ENCODE measurements at regions of chr12 and their contacts with region 1.

Region 1: DNA sequence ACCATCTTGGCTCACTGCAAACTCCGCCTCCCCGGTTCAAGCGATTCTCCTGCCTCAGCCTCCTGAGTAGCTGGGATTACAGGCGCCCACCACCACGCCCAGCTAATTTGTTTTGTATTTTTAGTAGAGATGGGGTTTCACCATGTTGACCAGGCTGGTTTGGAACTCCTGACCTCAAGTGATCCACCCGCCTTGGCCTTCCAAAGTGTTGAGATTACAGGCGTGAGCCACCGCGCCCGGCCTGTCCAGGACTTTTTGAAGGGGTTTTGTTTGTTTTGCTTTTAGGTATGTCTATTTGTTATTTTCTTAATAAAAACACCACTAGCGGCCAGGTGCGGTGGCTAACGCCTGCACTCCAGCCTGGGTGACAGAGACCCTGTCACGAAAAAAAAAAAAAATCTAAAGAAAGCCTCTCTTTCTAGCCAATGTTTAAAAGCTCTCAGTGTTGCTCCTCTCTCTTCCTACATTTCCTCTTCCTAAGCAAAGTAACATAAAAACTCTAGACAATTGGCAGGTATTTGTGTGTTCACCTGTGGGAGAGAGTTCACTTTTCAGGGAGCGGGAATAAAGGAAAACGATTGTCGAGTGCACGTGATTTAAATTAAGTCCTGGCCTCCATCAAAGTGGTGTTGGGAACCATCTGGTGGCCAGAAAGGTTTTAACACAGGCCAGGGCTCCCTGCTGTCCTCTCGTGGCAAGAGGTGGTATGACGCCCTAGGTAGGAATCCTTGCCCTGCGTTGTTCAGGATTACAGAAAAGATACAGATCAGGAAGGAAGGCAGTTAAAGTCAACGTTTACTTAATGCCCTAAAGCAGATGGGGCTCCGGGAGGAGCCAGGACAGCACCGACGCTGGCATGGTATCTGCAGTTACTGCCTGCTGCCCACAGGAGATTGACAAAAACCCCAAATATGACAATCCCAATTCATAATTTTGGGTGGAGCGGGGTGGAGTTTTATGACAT is 36.2 kb upstream of the ATP23 start:
- DNase-seq: peak; percentile 73
- H3K4me3 ChIP-seq: no peak overlapping the region
- H3K27ac ChIP-seq: no peak overlapping the region
- H3K4me1 ChIP-seq: no peaks in the 10 kb centered on the region
- H3K27me3 ChIP-seq: no peaks in the 10 kb centered on the region
- CTCF ChIP-seq: peak; percentile 100

Region 2: GRCh38 chr12:57751788-57752667 is 153.1 kb before region 1 on chr12 and contains the start of gene CDK4:
- CTCF ChIA-PET with region 1: no interaction called
- dilution Hi-C with region 1: no loop called
- in situ Hi-C with region 1: loop called in 1 of 2 experiments (anchors 10 kb)
- intact Hi-C with region 1: loop called (anchors 5 kb)
- DNase-seq: peak; percentile 99
- H3K4me3 ChIP-seq: peak within 1 kb of the TSS; percentile 69 to 89 (median 71)
- H3K27ac ChIP-seq: peak within 1 kb of the TSS; percentile 81
- H3K4me1 ChIP-seq: peaks cover 35% of the 10 kb centered on the region
- H3K27me3 ChIP-seq: no peaks in the 10 kb centered on the region
- CTCF ChIP-seq: no peak
- total RNA-seq, gene CDK4: 103 to 163 TPM

Region 3: GRCh38 chr12:57782608-57783465 is 122.3 kb before region 1 on chr12 and contains the start of gene TSFM:
- CTCF ChIA-PET with region 1: no interaction called
- dilution Hi-C with region 1: no loop called
- in situ Hi-C with region 1: no loop called
- intact Hi-C with region 1: loop called (anchors 1 kb)
- DNase-seq: peak; percentile 86
- H3K4me3 ChIP-seq: peak within 1 kb of the TSS; percentile 90 to 98 (median 98)
- H3K27ac ChIP-seq: peak within 1 kb of the TSS; percentile 69
- H3K4me1 ChIP-seq: peaks cover 10% of the 10 kb centered on the region
- H3K27me3 ChIP-seq: no peaks in the 10 kb centered on the region
- CTCF ChIP-seq: peak; percentile 80 to 94
- total RNA-seq, gene TSFM: 11.8 to 27.0 TPM

Region 4: GRCh38 chr12:57803319-57803893 is 101.7 kb before region 1 on chr12:
- CTCF ChIA-PET with region 1: no interaction called
- dilution Hi-C with region 1: no loop called
- in situ Hi-C with region 1: no loop called
- intact Hi-C with region 1: loop called (anchors 1 kb)
- DNase-seq: peak; percentile 42
- H3K4me3 ChIP-seq: no peak overlapping the region
- H3K27ac ChIP-seq: no peak overlapping the region
- H3K4me1 ChIP-seq: no peaks in the 10 kb centered on the region
- H3K27me3 ChIP-seq: no peaks in the 10 kb centered on the region
- CTCF ChIP-seq: peak; percentile 82 to 89

Region 5: GRCh38 chr12:57836442-57837375 is 68.4 kb before region 1 on chr12:
- CTCF ChIA-PET with region 1: interaction called, 5 read pairs
- dilution Hi-C with region 1: no loop called
- in situ Hi-C with region 1: loop called (anchors 5 kb)
- intact Hi-C with region 1: loop called (anchors 1 kb)
- DNase-seq: peak; percentile 61
- H3K4me3 ChIP-seq: no peak overlapping the region
- H3K27ac ChIP-seq: peak overlapping the region; percentile 31
- H3K4me1 ChIP-seq: peaks cover 47% of the 10 kb centered on the region
- H3K27me3 ChIP-seq: no peaks in the 10 kb centered on the region
- CTCF ChIP-seq: no peak

Region 6: GRCh38 chr12:57846577-57847319 is 58.4 kb before region 1 on chr12 and contains the start of gene CTDSP2:
- CTCF ChIA-PET with region 1: no interaction called
- dilution Hi-C with region 1: no loop called
- in situ Hi-C with region 1: no loop called
- intact Hi-C with region 1: loop called (anchors 1 kb)
- DNase-seq: peak; percentile 94
- H3K4me3 ChIP-seq: peak within 1 kb of the TSS; percentile 92 to 96 (median 95)
- H3K27ac ChIP-seq: peak within 1 kb of the TSS; percentile 93
- H3K4me1 ChIP-seq: peaks cover 27% of the 10 kb centered on the region
- H3K27me3 ChIP-seq: no peaks in the 10 kb centered on the region
- CTCF ChIP-seq: no peak
- total RNA-seq, gene CTDSP2: 51.3 to 76.1 TPM

Region 7: GRCh38 chr12:57888409-57889157 is 16.5 kb before region 1 on chr12:
- CTCF ChIA-PET with region 1: no interaction called
- dilution Hi-C with region 1: no loop called
- in situ Hi-C with region 1: no loop called
- intact Hi-C with region 1: loop called (anchors 1 kb)
- DNase-seq: peak; percentile 98
- H3K4me3 ChIP-seq: peak overlapping the region in 2 of 3 experiments; percentile 11 to 28
- H3K27ac ChIP-seq: peak overlapping the region; percentile 71
- H3K4me1 ChIP-seq: peaks cover 38% of the 10 kb centered on the region
- H3K27me3 ChIP-seq: no peaks in the 10 kb centered on the region
- CTCF ChIP-seq: no peak

Region 8: DNA sequence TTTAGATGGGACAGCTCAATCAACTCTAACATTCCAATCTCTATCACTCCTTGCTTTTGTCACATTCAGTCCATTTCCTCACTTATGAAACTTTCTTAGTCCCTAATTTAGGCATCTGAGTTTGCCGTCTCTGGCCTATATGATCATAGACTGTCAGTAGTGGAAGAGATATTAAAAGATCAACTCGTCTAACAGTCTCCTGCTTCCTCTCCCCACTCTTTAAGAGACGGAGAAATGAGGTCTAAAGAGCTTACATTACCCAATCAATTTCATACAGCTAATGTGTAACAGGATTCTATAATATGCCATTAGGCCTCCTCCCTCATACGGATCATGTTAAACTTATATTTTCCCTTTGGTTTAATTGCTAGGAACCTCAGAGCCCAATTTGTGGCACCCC is 29.7 kb after region 1 on chr12:
- CTCF ChIA-PET with region 1: no interaction called
- dilution Hi-C with region 1: no loop called
- in situ Hi-C with region 1: no loop called
- intact Hi-C with region 1: no loop called
- DNase-seq: no peak
- H3K4me3 ChIP-seq: no peak overlapping the region
- H3K27ac ChIP-seq: no peak overlapping the region
- H3K4me1 ChIP-seq: no peaks in the 10 kb centered on the region
- H3K27me3 ChIP-seq: no peaks in the 10 kb centered on the region
- CTCF ChIP-seq: no peak

Region 9: GRCh38 chr12:57998251-57998650 is 93.1 kb after region 1 on chr12:
- CTCF ChIA-PET with region 1: no interaction called
- dilution Hi-C with region 1: no loop called
- in situ Hi-C with region 1: no loop called
- intact Hi-C with region 1: no loop called
- DNase-seq: no peak
- H3K4me3 ChIP-seq: no peak overlapping the region
- H3K27ac ChIP-seq: no peak overlapping the region
- H3K4me1 ChIP-seq: no peaks in the 10 kb centered on the region
- H3K27me3 ChIP-seq: no peaks in the 10 kb centered on the region
- CTCF ChIP-seq: no peak

Measured in mammary epithelial cell (primary cell).